ENCODE measurements at regions of chr10 and their contacts with region 1.

Region 1: GRCh38 chr10:113985297-113985844 is 58.3 kb upstream of the ADRB1 start:
- DNase-seq: no peak
- H3K4me3 ChIP-seq: no peak overlapping the region
- H3K27ac ChIP-seq: no peak overlapping the region
- H3K4me1 ChIP-seq: no peaks in the 10 kb centered on the region
- H3K27me3 ChIP-seq: no peaks in the 10 kb centered on the region
- CTCF ChIP-seq: no peak
- POLR2A ChIP-seq: no peak

Region 2: GRCh38 chr10:113187063-113187777 is 798.2 kb before region 1 on chr10:
- CTCF ChIA-PET with region 1: no interaction called
- POLR2A ChIA-PET with region 1: no interaction called
- dilution Hi-C with region 1: no loop called
- intact Hi-C with region 1: no loop called
- DNase-seq: no peak
- H3K4me3 ChIP-seq: no peak overlapping the region
- H3K27ac ChIP-seq: no peak overlapping the region
- H3K4me1 ChIP-seq: no peaks in the 10 kb centered on the region
- H3K27me3 ChIP-seq: no peaks in the 10 kb centered on the region
- CTCF ChIP-seq: no peak
- POLR2A ChIP-seq: no peak

Region 3: GRCh38 chr10:113415246-113415645 is 570.1 kb before region 1 on chr10:
- CTCF ChIA-PET with region 1: no interaction called
- POLR2A ChIA-PET with region 1: interaction called, 10 read pairs
- dilution Hi-C with region 1: no loop called
- intact Hi-C with region 1: no loop called
- DNase-seq: no peak
- H3K4me3 ChIP-seq: no peak overlapping the region
- H3K27ac ChIP-seq: no peak overlapping the region
- H3K4me1 ChIP-seq: no peaks in the 10 kb centered on the region
- H3K27me3 ChIP-seq: no peaks in the 10 kb centered on the region
- CTCF ChIP-seq: no peak
- POLR2A ChIP-seq: no peak

Measured in endothelial cell of umbilical vein (primary cell).